ENCODE measurements at regions of chr3 and their contacts with region 1.

Region 1: GRCh38 chr3:99023590-99024192 is 122.2 kb upstream of the DCBLD2 start:
- DNase-seq: no peak
- ATAC-seq: no peak
- H3K4me3 Mint-ChIP-seq: no peak overlapping the region
- H3K27ac Mint-ChIP-seq: no peak overlapping the region
- H3K4me1 Mint-ChIP-seq: no peaks in the 10 kb centered on the region
- H3K27me3 Mint-ChIP-seq: peaks cover 2% of the 10 kb centered on the region
- CTCF ChIP-seq: peak; percentile 65

Region 2: GRCh38 chr3:99013077-99013476 is 10.6 kb before region 1 on chr3:
- CTCF ChIA-PET with region 1: no interaction called
- POLR2A ChIA-PET with region 1: no interaction called
- intact Hi-C with region 1: no loop called
- DNase-seq: no peak
- ATAC-seq: no peak
- H3K4me3 Mint-ChIP-seq: no peak overlapping the region
- H3K27ac Mint-ChIP-seq: no peak overlapping the region
- H3K4me1 Mint-ChIP-seq: no peaks in the 10 kb centered on the region
- H3K27me3 Mint-ChIP-seq: peaks cover 2% of the 10 kb centered on the region
- CTCF ChIP-seq: no peak

Region 3: DNA sequence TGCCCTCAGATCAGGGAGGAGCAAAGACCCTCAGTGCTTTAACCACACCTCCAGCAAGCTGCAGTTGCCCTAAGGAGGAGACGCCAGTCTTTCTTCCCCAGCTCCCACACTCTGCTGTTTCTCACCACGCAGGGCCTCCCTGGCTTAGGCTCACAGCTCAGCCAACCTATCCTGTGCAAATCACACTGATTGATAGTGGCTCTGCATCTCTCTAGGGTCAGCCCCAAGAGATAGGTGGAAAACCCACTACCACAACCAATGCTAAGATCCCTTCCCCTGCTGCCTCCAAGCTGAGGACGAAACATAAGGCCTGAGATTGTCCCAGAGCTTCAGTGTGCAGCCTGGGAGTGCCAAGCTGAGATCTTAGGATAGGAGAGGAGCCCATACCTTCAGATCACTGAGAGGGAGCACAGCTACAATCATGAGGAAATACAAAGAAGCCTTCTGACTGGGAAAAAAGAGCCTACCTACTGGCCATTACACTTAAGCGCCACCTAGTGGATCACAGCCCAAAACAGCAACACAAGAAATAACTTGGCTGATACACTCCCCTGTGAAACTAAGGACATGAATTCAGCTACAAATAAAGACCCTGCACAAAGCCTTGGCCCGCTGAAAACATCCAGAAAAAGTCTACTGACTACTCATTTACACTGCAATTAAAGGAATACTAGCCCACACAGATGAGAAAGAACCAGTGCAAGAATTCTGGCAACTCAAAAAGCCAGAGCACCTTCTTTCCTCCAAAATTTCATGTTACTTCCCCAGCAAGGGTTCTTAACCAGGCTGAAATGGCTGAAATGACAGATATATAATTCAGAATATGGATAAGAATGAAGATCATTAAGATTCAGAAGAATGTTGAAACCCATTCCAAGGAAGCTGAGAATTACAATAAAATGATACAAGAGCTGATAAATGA is 149.3 kb after region 1 on chr3:
- CTCF ChIA-PET with region 1: interaction called, 6 read pairs
- POLR2A ChIA-PET with region 1: no interaction called
- intact Hi-C with region 1: loop called (anchors 5 kb)
- DNase-seq: peak; percentile 55
- ATAC-seq: no peak
- H3K4me3 Mint-ChIP-seq: no peak overlapping the region
- H3K27ac Mint-ChIP-seq: no peak overlapping the region
- H3K4me1 Mint-ChIP-seq: no peaks in the 10 kb centered on the region
- H3K27me3 Mint-ChIP-seq: no peaks in the 10 kb centered on the region
- CTCF ChIP-seq: peak; percentile 69

Region 4: DNA sequence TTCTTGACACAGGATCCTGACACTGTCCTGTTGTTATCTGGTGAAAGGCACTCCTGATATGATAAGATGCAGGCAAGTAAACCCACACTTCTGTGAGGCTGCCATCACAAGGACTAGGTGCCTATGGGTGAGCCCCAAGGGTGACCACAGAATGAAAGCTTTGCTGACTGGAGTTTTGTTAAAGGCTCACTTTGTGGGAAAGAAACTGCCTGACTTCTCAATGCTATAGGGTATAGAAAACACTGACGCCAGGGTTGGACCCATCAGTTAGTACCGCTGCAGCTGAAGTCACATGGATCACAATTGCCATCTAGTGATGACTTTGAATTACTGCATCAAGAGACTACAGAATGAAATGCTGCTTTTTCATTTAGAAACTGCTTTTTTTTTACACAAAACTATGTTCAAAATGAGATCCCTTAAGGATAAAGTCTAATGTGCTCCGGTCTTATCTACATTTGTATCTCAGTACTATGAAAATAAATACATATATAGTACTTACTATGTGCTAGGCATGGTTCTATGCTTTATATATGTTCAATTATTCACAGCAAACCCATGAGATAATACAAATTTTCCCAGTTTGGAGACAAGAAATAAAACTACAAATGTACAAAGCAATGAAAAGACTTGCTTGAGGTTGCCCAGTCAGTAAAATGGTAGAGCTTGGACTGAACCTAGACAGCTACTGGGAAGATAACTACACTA is 729.7 kb after region 1 on chr3:
- CTCF ChIA-PET with region 1: interaction called, 4 read pairs
- POLR2A ChIA-PET with region 1: no interaction called
- intact Hi-C with region 1: loop called (anchors 10 kb)
- DNase-seq: peak; percentile 26
- ATAC-seq: peak; percentile 88
- H3K4me3 Mint-ChIP-seq: no peak overlapping the region
- H3K27ac Mint-ChIP-seq: no peak overlapping the region
- H3K4me1 Mint-ChIP-seq: no peaks in the 10 kb centered on the region
- H3K27me3 Mint-ChIP-seq: peaks cover 14% of the 10 kb centered on the region
- CTCF ChIP-seq: peak; percentile 74

Measured in activated CD8-positive, alpha-beta T cell treated with anti-CD3 and anti-CD28 coated beads for 36 hours (primary cell).